ENCODE measurements at regions of chr5 and their contacts with region 1.

Region 1: DNA sequence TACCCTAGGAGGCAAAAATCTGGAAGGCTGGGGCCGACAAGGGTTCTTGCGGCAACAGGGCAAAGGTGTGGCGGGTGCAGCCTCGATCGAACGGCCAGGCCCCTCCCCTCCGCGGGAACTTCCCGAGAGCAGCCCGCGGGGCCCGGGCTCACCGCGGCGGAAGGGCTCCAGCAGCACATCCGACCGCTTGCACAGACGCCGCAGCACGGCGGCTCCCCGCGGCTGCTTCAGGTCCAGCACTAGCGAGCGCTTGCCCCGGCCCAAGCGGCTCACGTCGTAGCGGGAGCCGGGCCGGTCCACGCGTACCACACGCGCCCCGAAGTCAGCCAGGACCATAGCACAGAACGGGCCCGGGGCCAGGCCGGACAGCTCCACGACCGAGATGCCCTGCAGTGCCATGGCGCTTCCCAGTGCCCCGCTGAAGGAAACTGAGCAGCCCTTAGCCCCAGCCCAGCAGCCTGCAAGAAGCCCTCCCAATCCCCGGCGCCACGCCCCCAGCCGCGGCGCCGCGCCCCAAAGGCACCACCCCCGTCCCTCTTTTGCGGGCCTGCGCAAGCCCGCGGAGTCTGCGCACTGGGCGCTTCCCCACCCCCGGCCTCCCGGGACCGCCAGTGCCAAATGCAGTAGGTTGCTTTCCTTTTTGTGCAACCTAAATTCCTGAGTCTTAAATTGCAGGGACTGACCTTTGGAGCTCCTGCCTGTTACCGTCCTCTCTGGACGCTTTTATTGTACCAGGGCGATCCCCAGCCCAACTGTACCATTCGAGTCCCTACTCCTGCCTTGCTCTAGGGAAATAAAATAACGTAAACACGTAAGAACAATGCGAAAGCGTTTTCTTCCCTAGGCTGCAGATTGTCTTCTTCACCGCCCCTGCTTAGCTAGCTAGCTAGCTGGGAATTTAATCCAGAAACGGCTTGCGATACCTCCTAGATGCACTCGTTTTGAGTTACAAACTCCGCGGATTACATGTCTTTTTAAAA is at the start of gene AMACR:
- DNase-seq: peak; percentile 96
- ATAC-seq: peak; percentile 99
- total RNA-seq, gene AMACR: 6.1 TPM

Region 2: GRCh38 chr5:33291216-33292000 is 716.5 kb before region 1 on chr5:
- intact Hi-C with region 1: no loop called
- DNase-seq: no peak
- ATAC-seq: peak; percentile 95

Region 3: DNA sequence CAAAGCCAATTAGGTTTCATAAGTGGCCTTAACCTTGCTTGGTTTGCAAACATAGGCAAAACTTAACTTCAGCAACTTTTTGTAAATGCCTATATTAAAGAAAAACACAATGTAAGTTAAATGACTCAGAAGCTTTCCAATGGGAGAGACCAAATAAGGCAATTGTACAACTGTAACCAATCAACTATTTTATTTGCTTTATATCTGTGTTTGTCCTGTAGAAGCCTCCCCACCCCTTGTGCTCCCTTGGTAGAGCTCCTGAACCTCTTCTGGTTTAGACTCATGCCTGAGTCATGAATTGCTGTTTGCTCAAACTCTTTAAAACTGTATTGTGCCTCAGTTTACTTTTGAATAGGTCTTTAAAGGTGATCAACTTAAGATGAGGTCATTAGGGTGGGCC is 38.1 kb after region 1 on chr5:
- intact Hi-C with region 1: loop called (anchors 2 kb)
- DNase-seq: no peak
- ATAC-seq: no peak